ENCODE measurements at regions of chr6 and their contacts with region 1.

Region 1: DNA sequence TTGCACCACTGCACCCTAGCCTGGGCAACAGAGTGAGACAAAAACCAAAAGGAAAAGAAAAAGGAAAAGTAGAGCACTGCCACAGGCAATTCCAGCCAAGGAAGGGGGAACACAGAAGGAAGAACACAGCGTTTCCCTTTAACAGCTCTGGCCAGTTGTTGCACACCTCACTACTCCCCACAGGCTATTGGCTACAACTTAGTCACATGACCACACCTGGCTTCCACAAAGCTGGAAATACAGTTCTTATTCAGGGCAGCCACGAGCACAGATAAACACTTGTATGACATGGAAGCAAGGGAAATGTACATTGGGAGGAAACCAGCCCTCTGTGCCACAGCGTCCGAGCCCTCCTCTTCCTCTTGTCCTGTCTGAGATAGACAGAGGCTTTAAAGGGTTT is 249.0 kb upstream of the JARID2 start:
- DNase-seq: no peak

Region 2: DNA sequence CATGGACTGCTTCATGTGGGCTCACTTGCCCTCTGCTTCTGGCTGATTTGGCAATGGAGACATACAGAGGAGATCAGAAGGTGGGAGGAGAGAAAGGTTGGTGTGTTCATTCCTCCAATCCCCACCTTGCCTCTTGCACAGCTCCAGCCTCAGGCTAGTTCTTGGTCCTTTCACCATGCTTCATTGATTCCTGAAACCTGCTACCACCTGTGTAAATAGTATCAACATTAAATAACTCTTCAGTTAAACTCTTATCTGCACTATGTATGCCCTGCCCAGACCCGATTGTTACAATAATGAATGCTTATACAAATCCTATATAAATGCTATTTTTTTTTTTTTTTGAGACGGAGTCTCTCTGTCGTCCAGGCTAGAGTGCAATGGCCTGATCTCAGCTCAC is 704.8 kb before region 1 on chr6:
- intact Hi-C with region 1: loop called in 1 of 2 experiments (anchors 5 kb)
- DNase-seq: no peak

Region 3: GRCh38 chr6:14765106-14765505 is 231.8 kb before region 1 on chr6:
- intact Hi-C with region 1: no loop called
- DNase-seq: no peak

Region 4: GRCh38 chr6:15327271-15327670 is 330.4 kb after region 1 on chr6:
- intact Hi-C with region 1: no loop called
- DNase-seq: no peak